ENCODE measurements at regions of chr10 and their contacts with region 1.

Region 1: GRCh38 chr10:28179006-28179742 is 123.7 kb downstream of the MPP7 start:
- DNase-seq: peak; percentile 58
- H3K4me3 Mint-ChIP-seq: no peak overlapping the region
- H3K27ac Mint-ChIP-seq: peak overlapping the region; percentile 81
- H3K4me1 Mint-ChIP-seq: peaks cover 44% of the 10 kb centered on the region
- H3K27me3 Mint-ChIP-seq: no peaks in the 10 kb centered on the region

Region 2: GRCh38 chr10:27369880-27370279 is 809.3 kb before region 1 on chr10:
- CTCF ChIA-PET with region 1: no interaction called
- intact Hi-C with region 1: loop called (anchors 2 kb)
- DNase-seq: no peak
- H3K4me3 Mint-ChIP-seq: no peak overlapping the region
- H3K27ac Mint-ChIP-seq: no peak overlapping the region
- H3K4me1 Mint-ChIP-seq: peaks cover 12% of the 10 kb centered on the region
- H3K27me3 Mint-ChIP-seq: no peaks in the 10 kb centered on the region

Region 3: DNA sequence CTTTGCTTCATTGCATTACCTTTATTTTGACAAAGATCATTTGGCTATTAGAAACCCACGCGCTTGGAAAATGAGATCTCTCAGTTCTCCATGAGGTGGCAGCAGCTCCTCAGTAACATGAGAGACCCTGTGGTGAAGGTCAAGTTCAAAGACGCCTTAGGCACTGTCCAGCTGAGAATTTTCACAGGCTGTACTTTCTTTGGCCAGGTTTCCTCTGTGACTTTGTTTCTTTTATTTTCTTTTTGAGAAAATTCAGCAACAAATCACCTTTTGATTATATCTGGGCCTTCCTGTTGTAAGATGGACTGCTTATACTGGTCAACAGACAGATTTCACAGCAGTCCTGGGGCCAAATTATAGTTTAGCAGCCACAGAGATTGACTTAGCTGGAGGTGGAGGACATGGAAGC is 620.6 kb before region 1 on chr10:
- CTCF ChIA-PET with region 1: no interaction called
- intact Hi-C with region 1: loop called (anchors 1 kb)
- DNase-seq: peak; percentile 60
- H3K4me3 Mint-ChIP-seq: no peak overlapping the region
- H3K27ac Mint-ChIP-seq: no peak overlapping the region
- H3K4me1 Mint-ChIP-seq: no peaks in the 10 kb centered on the region
- H3K27me3 Mint-ChIP-seq: no peaks in the 10 kb centered on the region

Region 4: GRCh38 chr10:27865221-27865638 is 313.9 kb before region 1 on chr10:
- CTCF ChIA-PET with region 1: no interaction called
- intact Hi-C with region 1: loop called (anchors 2 kb)
- DNase-seq: no peak
- H3K4me3 Mint-ChIP-seq: no peak overlapping the region
- H3K27ac Mint-ChIP-seq: no peak overlapping the region
- H3K4me1 Mint-ChIP-seq: no peaks in the 10 kb centered on the region
- H3K27me3 Mint-ChIP-seq: peaks cover 8% of the 10 kb centered on the region

Region 5: GRCh38 chr10:28217848-28218247 is 38.7 kb after region 1 on chr10:
- CTCF ChIA-PET with region 1: interaction called, 4 read pairs
- intact Hi-C with region 1: loop called (anchors 1 kb)
- DNase-seq: peak; percentile 45
- H3K4me3 Mint-ChIP-seq: no peak overlapping the region
- H3K27ac Mint-ChIP-seq: no peak overlapping the region
- H3K4me1 Mint-ChIP-seq: peaks cover 48% of the 10 kb centered on the region
- H3K27me3 Mint-ChIP-seq: no peaks in the 10 kb centered on the region

Region 6: DNA sequence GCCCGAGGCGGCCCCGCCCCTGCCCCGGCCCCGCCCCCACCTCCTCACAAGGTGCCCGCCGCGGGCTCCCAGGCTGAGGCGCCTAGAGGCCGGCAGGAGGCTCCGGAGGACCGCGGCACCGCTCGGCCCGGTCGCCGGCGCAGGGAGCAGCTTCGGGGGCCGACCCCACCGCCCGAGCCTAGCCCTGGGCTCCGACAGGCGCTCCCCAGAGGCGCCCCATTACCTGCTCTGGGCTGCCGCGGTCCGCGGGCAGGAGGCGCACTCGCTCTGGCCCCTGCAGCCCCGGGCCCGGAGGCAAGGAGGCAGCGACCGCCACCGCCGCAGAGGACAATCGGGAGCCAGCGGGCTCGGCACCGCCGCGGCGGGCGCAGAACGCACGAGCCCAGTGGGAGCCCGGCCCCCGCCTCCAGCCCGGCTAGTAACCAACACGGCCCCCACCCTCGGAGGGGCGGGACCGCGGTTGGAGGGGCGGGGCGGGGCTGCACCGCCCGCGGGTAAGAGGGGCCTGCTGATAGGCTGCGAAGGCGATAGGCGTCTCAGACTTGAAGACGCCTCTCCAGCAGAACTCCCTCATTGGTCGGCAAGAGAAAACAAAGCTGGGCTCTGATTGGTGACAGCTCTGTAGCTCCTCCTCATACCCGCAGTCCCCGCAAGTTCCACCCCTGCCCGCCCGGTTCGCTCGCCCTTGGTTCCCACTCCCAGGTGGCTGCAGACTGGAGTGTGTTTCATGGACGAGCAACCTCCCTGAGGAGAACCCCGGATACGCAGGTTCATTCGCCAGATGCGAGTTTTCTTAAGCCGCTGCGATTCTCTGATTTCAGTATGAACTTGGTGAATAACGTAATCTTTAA is 123.7 kb after region 1 on chr10 and contains the start of gene MPP7:
- CTCF ChIA-PET with region 1: no interaction called
- intact Hi-C with region 1: loop called (anchors 2 kb)
- DNase-seq: peak; percentile 95
- H3K4me3 Mint-ChIP-seq: peak within 1 kb of the TSS; percentile 82
- H3K27ac Mint-ChIP-seq: peak within 1 kb of the TSS; percentile 77
- H3K4me1 Mint-ChIP-seq: peaks cover 53% of the 10 kb centered on the region
- H3K27me3 Mint-ChIP-seq: no peaks in the 10 kb centered on the region
- total RNA-seq, gene MPP7: 23.6 to 25.4 TPM